Activated T-helper 2 cell treated with anti-CD3 and anti-CD28 coated beads, Interferon-gamma antibody, Interleukin-2, Interleukin-4, amounts not matched to agents 10 μg/mL and 5 μg/mL and 100 μg/mL, durations not matched to agents 14 hours and 24 hours and 36 hours (primary cell): ENCODE measurements at regions of chr7 and their contacts with region 1.

Region 1: DNA sequence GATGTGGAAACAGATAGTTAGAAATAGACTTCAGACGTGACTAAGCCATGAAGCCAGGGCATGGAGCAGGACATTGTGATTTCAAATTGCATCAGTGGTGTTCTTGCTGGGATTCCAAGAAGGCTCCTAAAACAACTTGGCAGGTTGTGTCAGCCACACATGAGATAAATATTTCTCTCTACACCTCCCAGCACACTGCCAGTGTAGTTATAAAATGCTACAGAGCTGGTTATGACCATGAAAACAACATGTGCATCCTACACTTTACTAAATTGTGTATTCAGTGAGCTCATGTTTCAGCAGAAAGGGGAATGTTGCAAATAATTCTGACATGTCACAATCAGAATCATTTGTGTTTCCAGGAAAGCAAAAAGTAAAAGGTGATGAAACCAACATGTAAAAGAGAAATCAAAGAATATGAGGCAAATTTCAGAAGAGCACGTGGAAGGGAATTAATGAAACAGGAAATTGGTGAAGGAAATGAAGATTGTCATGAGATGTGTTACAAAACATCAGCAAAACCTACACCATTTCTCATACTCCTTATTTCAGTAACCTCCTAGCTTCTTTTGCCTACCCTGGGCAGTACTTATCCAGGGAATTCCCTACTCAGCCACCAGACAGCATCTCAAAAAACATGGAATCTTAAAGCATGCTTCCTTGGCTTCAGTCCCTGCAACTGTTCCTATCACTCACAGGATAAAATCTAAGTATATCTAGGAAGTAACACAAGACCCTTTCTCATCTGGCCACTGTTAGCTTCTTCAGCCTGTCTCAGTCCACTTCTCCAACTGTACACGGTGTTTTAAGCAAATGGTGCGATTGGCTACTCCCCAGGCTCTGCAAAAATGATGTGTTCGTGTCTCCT is 5.8 kb upstream of the CYP3A7 start:
- DNase-seq: no peak
- H3K4me3 Mint-ChIP-seq: no peak overlapping the region
- H3K27ac Mint-ChIP-seq: no peak overlapping the region
- H3K4me1 Mint-ChIP-seq: peaks cover 8% of the 10 kb centered on the region
- H3K27me3 Mint-ChIP-seq: peaks cover 3% of the 10 kb centered on the region

Region 2: GRCh38 chr7:99837649-99838361 is 97.0 kb after region 1 on chr7:
- intact Hi-C with region 1: loop called (anchors 10 kb)
- DNase-seq: no peak
- H3K4me3 Mint-ChIP-seq: no peak overlapping the region
- H3K27ac Mint-ChIP-seq: no peak overlapping the region
- H3K4me1 Mint-ChIP-seq: peaks cover 7% of the 10 kb centered on the region
- H3K27me3 Mint-ChIP-seq: peaks cover 15% of the 10 kb centered on the region

Region 3: DNA sequence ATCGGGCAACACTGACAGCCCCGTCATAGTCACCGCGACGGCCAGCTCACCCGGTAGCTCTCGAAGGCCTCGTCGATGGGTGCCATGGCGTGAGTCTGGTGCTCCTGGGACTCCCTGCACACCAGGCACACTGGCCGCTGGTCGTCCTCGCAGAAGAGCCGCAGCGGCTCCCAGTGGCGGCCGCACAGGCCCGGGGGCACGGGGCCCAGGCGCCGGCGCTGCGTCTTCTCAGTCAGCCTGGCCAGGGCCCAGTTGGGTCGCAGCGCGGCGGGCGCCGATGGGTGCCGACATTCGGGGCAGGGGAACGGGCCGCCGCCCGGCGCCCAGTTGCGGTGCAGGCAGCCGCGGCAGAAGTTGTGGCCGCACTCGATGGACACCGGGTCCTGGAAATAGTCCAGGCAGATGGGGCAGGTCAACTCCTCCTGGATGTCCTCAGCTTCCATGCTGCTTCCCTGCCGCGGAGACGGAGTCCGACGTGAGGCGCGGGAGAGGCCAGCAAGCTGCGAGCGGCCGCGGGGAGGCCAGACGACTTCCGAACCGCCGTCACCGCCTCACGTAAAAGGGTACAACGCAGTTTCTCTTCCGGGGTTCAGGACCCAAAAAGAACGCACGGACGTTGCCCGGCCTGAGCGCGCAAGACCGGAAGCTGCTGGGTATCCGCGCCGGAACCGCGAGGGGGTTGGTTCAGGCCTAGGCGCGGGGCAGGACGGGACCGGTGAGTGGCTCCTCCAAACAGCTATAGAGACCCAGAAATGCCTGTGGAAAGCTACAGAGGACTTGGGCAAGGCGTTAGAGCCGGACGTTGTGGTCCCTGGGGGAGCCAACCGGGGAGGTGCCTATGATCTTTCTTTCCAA is 178.4 kb after region 1 on chr7 and contains the start of gene TRIM4:
- intact Hi-C with region 1: no loop called
- DNase-seq: peak; percentile 90
- H3K4me3 Mint-ChIP-seq: peak within 1 kb of the TSS; percentile 96
- H3K27ac Mint-ChIP-seq: peak within 1 kb of the TSS; percentile 94
- H3K4me1 Mint-ChIP-seq: peaks cover 29% of the 10 kb centered on the region
- H3K27me3 Mint-ChIP-seq: no peaks in the 10 kb centered on the region
- total RNA-seq, gene TRIM4: 21.8 and 23.2 TPM in 2 replicates